ENCODE measurements at regions of chr5 and their contacts with region 1.

Region 1: GRCh38 chr5:9140711-9141110 is 405.2 kb downstream of the SEMA5A start:
- DNase-seq: no peak
- H3K4me3 ChIP-seq: no peak overlapping the region
- H3K27me3 ChIP-seq: no peaks in the 10 kb centered on the region
- CTCF ChIP-seq: no peak

Region 2: GRCh38 chr5:9126490-9126889 is 14.2 kb before region 1 on chr5:
- CTCF ChIA-PET with region 1: no interaction called
- POLR2A ChIA-PET with region 1: interaction called, 17 read pairs
- DNase-seq: no peak
- H3K4me3 ChIP-seq: no peak overlapping the region
- H3K27me3 ChIP-seq: no peaks in the 10 kb centered on the region
- CTCF ChIP-seq: no peak

Region 3: GRCh38 chr5:9156282-9156681 is 15.6 kb after region 1 on chr5:
- CTCF ChIA-PET with region 1: no interaction called
- POLR2A ChIA-PET with region 1: no interaction called
- DNase-seq: no peak
- H3K4me3 ChIP-seq: no peak overlapping the region
- H3K27me3 ChIP-seq: no peaks in the 10 kb centered on the region
- CTCF ChIP-seq: peak; percentile 64

Region 4: DNA sequence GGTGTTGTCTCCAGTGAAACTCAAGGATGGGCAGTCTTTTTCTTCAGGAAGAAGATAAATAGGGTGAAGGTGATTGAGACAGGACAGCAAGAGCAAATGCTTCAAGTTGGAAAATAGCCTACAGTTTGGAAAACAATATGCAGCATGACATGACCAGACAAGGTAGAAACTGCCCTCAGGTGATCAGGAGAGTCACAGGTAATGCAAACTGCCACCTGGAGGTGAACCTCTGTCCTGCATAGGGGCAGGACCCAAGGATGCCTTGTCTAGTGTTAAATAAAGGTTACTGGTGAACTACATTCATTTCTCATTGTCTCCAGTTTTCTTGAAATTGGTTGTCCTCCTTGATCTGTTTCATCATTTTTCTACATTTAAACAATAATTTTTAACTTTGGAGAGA is 173.0 kb after region 1 on chr5:
- CTCF ChIA-PET with region 1: no interaction called
- POLR2A ChIA-PET with region 1: no interaction called
- DNase-seq: no peak
- H3K4me3 ChIP-seq: no peak overlapping the region
- H3K27me3 ChIP-seq: no peaks in the 10 kb centered on the region
- CTCF ChIP-seq: no peak